Left cardiac atrium (tissue), 4 donors: ENCODE measurements at regions of chr2 and their contacts with region 1.

Region 1: DNA sequence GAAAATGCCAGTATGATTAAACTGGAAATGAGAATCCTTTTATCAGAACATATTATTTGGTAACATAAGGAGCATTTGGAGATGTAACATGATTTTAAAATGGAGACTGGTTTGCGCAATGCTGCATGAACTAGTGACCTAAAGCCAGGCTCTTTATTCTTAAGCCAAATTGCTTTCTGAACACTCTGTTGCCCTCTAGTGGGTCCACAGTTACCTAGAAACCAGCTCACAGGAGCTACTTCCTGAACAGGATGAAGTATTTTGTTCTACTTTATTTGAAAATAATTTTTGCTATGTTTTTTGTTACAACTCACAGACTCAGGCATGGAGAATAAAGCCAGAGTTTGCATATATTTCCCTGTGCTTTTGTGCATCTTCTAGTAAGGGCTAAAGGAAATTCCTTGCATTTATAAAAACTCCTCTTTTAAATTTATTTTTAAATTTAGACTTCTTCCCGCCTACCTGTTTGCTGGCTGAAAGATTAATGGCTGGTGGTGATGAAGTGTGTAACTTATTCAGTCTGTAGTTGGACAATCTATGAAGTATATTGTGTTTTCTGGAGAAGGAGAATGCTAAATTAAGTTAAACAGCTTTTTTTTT is 146.7 kb downstream of the PARD3B start:
- DNase-seq: peak; percentile 41
- ATAC-seq: peak; percentile 84 to 92

Region 2: GRCh38 chr2:204260162-204260877 is 431.7 kb before region 1 on chr2:
- intact Hi-C with region 1: loop called in 1 of 2 experiments (anchors 2 kb)
- DNase-seq: peak; percentile 71
- ATAC-seq: peak; percentile 73 to 74

Region 3: DNA sequence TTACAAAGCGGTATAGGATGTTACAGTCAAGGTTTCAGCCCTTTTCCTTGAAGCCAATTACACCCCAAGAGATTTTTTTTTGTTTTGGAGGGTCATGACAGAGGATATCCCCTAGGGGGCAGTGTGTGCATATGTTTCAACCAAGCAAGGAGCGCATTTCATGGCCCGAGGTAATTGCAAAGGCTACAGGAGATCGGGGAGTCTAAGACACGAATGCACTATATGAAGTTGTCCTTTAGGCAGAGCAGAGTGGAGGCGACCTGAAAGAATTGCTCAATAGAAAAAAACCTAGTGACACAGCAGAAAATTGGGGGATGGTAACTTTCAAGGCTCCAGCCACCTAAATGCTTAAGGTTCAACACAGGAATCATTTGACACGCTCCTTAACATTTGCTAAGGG is 366.5 kb before region 1 on chr2:
- intact Hi-C with region 1: loop called (anchors 2 to 5 kb)
- DNase-seq: peak; percentile 54
- ATAC-seq: peak; percentile 62 to 69

Region 4: DNA sequence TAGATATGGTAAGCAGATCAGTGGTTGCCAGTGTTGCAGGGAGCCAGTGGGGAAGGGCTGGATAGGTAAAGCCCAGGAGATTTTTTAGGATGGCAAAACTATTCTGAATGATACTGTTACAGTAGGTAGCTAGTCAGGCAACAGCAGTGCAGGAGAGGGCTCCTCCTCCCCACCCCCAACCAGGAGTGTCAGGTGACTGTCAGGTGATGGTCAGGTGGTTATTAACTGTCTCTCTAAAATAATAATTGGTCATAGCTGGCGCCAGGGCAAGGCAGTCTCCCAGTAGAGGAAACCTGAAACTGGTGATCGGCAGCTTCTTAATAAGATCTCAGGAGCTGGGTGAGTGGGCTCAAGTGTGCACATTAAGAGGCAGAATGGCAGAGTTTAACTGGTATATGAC is 348.3 kb before region 1 on chr2:
- intact Hi-C with region 1: no loop called
- DNase-seq: no peak
- ATAC-seq: no peak

Region 5: DNA sequence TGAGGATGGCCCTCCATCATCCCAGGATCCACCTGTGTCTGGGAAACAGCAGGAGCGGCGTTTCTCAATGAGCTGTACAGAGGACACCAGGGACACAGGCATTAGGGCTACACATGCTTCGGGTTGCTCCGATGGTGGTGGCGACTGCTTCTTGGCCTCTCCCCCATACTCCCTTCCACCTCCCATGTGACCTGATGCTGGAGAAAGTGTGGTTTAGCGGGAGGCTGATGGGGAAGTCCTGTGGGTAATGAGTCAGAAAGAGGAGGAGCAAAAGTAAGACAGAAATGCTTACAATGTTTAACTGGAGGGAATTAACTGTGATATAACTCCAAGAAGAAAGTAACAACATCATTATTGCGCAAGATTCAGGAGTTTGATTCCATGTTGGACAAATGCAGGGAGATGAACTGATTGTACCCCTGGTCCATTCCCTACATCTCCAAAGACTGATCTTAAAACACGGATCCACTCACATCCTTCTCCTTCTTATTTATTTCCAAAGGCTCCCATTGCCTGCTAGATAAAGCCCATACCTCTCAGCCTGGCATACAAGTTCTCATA is 1176.8 kb after region 1 on chr2:
- intact Hi-C with region 1: no loop called
- DNase-seq: no peak
- ATAC-seq: peak in 1 of 2 donors; percentile 65